Mammary epithelial cell (primary cell): ENCODE measurements at regions of chr22 and their contacts with region 1.

Region 1: DNA sequence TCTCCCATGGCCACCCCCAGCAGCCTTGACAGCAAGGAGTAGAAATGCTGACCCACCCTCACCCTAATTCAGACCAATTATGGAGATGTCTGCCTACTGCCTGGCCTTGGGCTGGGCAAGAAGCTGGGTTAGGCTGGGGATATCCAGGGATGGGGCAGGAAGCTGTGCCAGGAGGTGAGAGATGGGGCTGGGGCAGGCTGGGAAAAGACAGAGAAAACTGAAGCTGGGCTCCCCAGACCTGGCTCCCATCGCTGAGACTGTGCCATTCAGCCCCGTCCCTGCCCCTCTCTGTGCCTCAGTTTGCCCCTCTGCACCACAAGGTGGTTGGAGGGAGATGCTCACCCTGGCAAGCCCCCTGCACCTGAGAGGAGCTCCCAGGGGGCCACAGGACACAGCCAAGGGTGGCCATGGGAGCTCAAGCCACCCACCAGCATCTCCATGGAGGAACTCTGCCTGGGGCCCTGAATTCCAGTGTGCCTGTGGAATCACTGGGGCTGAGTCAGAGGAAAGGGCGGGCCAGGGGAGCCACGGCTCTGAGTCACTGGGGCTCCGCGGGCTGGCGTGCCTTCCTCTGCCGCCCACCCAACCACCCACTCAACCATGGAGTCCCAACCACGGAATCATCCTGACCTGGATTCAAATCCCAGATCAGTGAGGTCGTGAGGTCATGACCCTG is 6.0 kb upstream of the CARD10 start:
- DNase-seq: peak; percentile 94
- H3K4me3 ChIP-seq: no peak overlapping the region
- H3K27ac ChIP-seq: peak overlapping the region; percentile 97
- H3K4me1 ChIP-seq: peaks cover 32% of the 10 kb centered on the region
- H3K27me3 ChIP-seq: no peaks in the 10 kb centered on the region
- CTCF ChIP-seq: no peak

Region 2: GRCh38 chr22:37428649-37429586 is 96.3 kb before region 1 on chr22:
- CTCF ChIA-PET with region 1: no interaction called
- dilution Hi-C with region 1: no loop called
- in situ Hi-C with region 1: no loop called
- intact Hi-C with region 1: loop called (anchors 1 kb)
- DNase-seq: no peak
- H3K4me3 ChIP-seq: no peak overlapping the region
- H3K27ac ChIP-seq: no peak overlapping the region
- H3K4me1 ChIP-seq: peaks cover 36% of the 10 kb centered on the region
- H3K27me3 ChIP-seq: no peaks in the 10 kb centered on the region
- CTCF ChIP-seq: peak; percentile 49 to 65